H1 (cell line): ENCODE measurements at regions of chr15 and their contacts with region 1.

Region 1: GRCh38 chr15:93331545-93332167 is 242.6 kb upstream of the RGMA start:
- DNase-seq: peak; percentile 59 to 69
- H3K4me3 ChIP-seq: peak overlapping the region; percentile 21 to 53 (median 33); a peak in 6 of 8 replicates
- H3K27ac ChIP-seq: no peak overlapping the region
- H3K4me1 ChIP-seq: peaks cover 8 to 23% (median 20%) of the 10 kb centered on the region in 4 experiments
- H3K27me3 ChIP-seq: peaks cover 5 to 44% (median 31%) of the 10 kb centered on the region in 4 experiments
- CTCF ChIP-seq: no peak
- EP300 ChIP-seq: peak in 1 of 2 experiments; percentile 66; a peak in 1 of 3 replicates
- POLR2A ChIP-seq: no peak
- RAD21 ChIP-seq: peak; percentile 11 to 34; a peak in 2 of 4 replicates

Region 2: DNA sequence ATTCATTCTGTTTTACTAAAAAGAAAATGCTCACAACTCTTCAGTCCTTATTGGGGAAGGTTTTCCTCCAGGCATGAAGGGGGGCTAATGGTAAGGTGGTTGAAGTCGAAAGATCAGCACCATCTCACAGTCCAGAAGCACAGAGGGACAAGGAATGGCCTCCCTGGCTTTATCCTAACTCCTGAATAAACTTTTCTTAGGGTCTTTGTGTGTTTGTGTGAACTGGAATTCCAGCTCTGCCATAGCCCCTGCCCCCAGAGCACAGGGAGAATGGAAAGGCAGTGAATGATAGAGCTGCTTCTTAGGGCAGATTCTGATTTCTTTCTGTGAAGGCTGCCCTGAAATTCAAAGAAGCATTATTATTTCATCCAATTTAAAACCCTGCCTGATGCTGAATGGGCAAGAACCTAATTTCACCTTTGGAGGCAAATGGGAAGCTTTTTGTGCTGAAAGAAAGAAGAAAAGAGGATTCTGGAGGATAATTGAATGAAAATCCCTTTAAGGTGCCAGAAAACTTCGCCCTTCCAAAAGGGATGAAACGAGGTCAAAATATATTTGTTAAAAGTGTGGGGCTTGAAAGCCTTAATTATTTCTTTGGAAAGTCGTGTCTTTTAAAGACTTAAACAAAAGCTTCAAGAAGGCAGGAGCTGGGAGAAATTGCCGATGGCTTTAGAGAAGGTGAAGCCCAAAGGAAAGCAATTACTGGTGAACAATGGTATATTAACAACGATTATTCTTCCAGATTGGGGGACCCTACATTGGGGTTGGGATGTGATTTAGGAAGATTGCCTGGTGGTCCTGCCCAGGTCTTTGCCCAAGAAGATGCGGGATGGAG is 17.3 kb after region 1 on chr15:
- CTCF ChIA-PET with region 1: interaction called, 10 read pairs
- POLR2A ChIA-PET with region 1: no interaction called
- DNase-seq: no peak
- H3K4me3 ChIP-seq: no peak overlapping the region
- H3K27ac ChIP-seq: no peak overlapping the region
- H3K4me1 ChIP-seq: peaks cover 0 to 2% (median 0%) of the 10 kb centered on the region in 4 experiments; a peak in 2 of 7 replicates
- H3K27me3 ChIP-seq: peaks cover 0 to 2% (median 0%) of the 10 kb centered on the region in 4 experiments; a peak in 1 of 7 replicates
- CTCF ChIP-seq: no peak
- EP300 ChIP-seq: no peak
- POLR2A ChIP-seq: no peak
- RAD21 ChIP-seq: no peak

Region 3: DNA sequence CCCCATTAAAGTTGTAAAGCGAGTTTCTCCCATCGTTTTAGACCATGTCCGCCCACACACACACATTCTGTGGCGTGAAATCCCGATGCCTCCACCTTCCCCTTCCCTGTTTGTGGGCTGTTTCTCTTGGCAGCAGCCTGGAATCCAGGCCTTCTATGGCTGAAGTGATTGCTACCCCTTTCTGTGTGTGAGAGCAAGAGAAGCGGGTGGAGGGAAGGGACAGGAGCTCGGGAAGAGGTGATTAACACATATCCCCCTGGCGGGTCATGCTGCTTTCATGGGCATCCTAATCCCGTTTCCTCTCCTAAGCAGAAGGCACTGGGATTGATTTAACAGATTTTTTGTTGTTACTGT is 41.2 kb after region 1 on chr15:
- CTCF ChIA-PET with region 1: no interaction called
- POLR2A ChIA-PET with region 1: no interaction called
- DNase-seq: no peak
- H3K4me3 ChIP-seq: no peak overlapping the region
- H3K27ac ChIP-seq: no peak overlapping the region
- H3K4me1 ChIP-seq: no peaks in the 10 kb centered on the region
- H3K27me3 ChIP-seq: no peaks in the 10 kb centered on the region; a peak in 1 of 7 replicates
- CTCF ChIP-seq: no peak
- EP300 ChIP-seq: no peak
- POLR2A ChIP-seq: no peak
- RAD21 ChIP-seq: no peak